ENCODE measurements at regions of chr7 and their contacts with region 1.

Region 1: DNA sequence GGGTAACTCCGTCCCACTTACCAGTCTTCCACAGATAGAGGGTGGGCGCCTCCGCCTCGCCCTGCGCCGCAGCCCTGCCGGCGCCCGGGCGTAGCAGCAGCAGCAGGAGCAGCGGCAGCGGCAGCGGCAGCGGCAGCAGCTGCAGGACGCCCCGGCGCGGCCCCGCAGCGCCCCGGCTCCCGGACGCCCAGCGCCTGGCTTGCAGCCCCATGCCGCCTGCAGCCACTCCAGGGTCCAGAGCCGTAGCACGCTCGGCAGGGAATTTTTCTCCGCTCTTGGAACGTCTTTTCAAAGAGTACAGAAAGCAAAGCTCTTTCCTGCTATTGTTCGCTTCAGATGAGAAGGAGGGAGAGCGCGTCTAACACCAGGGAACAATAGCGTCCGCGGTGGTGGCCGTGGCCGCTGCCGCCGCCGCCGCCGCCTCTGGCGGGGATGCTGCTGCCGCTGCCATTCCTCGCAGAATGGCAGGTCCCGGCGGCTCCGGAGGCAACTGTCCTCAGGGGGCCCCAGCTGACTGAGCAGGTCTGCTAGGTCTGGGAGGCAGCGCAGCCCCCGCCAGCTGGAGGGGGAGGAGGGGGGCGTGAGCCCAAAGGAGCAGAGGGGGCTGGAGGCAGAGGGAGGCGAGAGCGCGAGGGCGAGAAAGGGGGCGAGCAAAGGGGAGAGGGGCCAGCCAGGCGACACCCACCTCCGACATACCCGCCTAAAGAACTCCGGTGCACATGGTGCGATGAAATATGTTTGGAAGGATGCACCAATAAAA is at the start of gene THSD7A:
- DNase-seq: peak; percentile 31 to 67
- H3K4me3 ChIP-seq: peak within 1 kb of the TSS; percentile 33
- H3K4me3 Mint-ChIP-seq: peak within 1 kb of the TSS; percentile 71
- H3K27ac Mint-ChIP-seq: no peak within 1 kb of the TSS
- H3K4me1 ChIP-seq: peaks cover 7% of the 10 kb centered on the region
- H3K4me1 Mint-ChIP-seq: no peaks in the 10 kb centered on the region
- H3K27me3 ChIP-seq: no peaks in the 10 kb centered on the region; the same call in 1 of the 2 replicates
- H3K27me3 Mint-ChIP-seq: peaks cover 21% of the 10 kb centered on the region
- CTCF ChIP-seq: peak in 1 of 2 experiments; percentile 24
- total RNA-seq, gene THSD7A: 0.05 TPM in 2 replicates

Region 2: DNA sequence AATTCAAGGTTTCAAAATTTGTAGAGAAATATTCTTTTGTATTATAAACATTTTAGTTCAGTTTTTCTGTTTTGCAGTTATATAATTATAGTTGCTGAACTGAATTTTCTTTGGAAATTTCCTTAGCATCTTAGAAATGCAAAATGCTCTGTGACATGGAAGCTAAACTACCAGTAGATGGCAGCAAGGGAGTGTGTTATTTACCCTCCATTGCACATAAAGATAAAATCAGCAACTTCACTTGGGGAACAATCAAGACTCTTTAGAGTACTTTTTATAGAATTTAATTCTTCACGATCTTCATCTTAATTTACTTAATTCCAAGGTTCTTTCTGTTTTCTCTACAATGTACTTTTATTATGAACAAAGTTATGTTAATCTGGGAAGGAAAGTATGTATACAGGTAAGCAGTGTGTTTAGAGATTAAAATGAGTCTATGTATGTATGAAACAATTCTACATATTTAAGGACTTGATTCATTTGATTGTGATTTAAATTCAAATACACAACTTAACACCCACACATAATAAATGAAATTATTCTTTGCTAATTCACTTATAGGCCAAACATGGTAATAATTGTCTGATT is 404.1 kb before region 1 on chr7:
- CTCF ChIA-PET with region 1: no interaction called
- POLR2A ChIA-PET with region 1: no interaction called
- intact Hi-C with region 1: loop called (anchors 5 kb)
- DNase-seq: peak in 1 of 2 experiments; percentile 24
- H3K4me3 ChIP-seq: no peak overlapping the region
- H3K4me3 Mint-ChIP-seq: no peak overlapping the region
- H3K27ac Mint-ChIP-seq: no peak overlapping the region
- H3K4me1 ChIP-seq: no peaks in the 10 kb centered on the region
- H3K4me1 Mint-ChIP-seq: no peaks in the 10 kb centered on the region
- H3K27me3 ChIP-seq: no peaks in the 10 kb centered on the region
- H3K27me3 Mint-ChIP-seq: no peaks in the 10 kb centered on the region
- CTCF ChIP-seq: peak; percentile 72 to 78

Region 3: DNA sequence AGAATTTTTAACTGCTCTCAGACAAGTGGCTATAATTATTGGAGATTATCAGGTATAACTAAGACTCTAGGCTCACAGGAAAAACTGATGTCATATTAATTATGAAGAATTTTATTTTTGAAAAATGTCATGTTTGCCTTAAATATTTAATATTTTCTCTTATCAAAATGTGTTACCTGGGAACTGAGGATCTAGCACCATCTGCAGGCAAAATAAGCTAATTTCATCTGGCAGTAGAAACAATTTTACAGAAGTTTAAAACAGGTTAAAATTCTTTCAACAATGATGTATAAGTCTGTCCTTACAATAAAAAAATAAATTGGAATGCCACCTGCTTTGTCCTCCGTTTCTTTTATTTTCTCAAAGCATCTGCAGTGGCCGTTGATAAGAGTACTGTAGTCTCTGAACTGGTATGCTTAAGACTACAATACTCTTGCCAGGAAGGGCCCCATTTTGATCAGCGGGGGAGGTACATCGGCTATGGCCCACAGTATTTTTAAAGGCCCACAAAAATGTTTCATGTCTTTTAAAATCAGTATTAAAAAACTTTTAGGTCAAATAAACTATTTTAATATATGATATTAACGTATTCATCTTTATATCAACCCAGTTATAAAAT is 490.5 kb after region 1 on chr7:
- CTCF ChIA-PET with region 1: interaction called, 4 read pairs
- POLR2A ChIA-PET with region 1: no interaction called
- intact Hi-C with region 1: loop called (anchors 1 kb)
- DNase-seq: peak in 1 of 2 experiments; percentile 10
- H3K4me3 ChIP-seq: no peak overlapping the region
- H3K4me3 Mint-ChIP-seq: no peak overlapping the region
- H3K27ac Mint-ChIP-seq: no peak overlapping the region
- H3K4me1 ChIP-seq: no peaks in the 10 kb centered on the region
- H3K4me1 Mint-ChIP-seq: no peaks in the 10 kb centered on the region
- H3K27me3 ChIP-seq: no peaks in the 10 kb centered on the region
- H3K27me3 Mint-ChIP-seq: no peaks in the 10 kb centered on the region
- CTCF ChIP-seq: peak; percentile 72 to 82

Region 4: GRCh38 chr7:12389089-12389700 is 557.3 kb after region 1 on chr7:
- CTCF ChIA-PET with region 1: no interaction called
- POLR2A ChIA-PET with region 1: no interaction called
- intact Hi-C with region 1: loop called (anchors 1 kb)
- DNase-seq: peak; percentile 60 to 65
- H3K4me3 ChIP-seq: no peak overlapping the region
- H3K4me3 Mint-ChIP-seq: no peak overlapping the region
- H3K27ac Mint-ChIP-seq: no peak overlapping the region
- H3K4me1 ChIP-seq: no peaks in the 10 kb centered on the region
- H3K4me1 Mint-ChIP-seq: no peaks in the 10 kb centered on the region
- H3K27me3 ChIP-seq: no peaks in the 10 kb centered on the region
- H3K27me3 Mint-ChIP-seq: no peaks in the 10 kb centered on the region
- CTCF ChIP-seq: peak; percentile 74 to 91

Measured in Caco-2 (cell line).